Colonic mucosa (tissue), 4 donors: ENCODE measurements at regions of chr13 and their contacts with region 1.

Region 1: GRCh38 chr13:110944121-110944967 is 29.5 kb upstream of the ANKRD10 start:
- DNase-seq: no peak
- H3K4me3 ChIP-seq: no peak overlapping the region
- H3K27ac ChIP-seq: no peak overlapping the region
- H3K4me1 ChIP-seq: no peaks in the 10 kb centered on the region
- H3K27me3 ChIP-seq: no peaks in the 10 kb centered on the region
- CTCF ChIP-seq: peak; percentile 28

Region 2: GRCh38 chr13:110737555-110737954 is 206.8 kb before region 1 on chr13:
- intact Hi-C with region 1: no loop called
- DNase-seq: no peak
- H3K4me3 ChIP-seq: no peak overlapping the region
- H3K27ac ChIP-seq: no peak overlapping the region
- H3K4me1 ChIP-seq: no peaks in the 10 kb centered on the region
- H3K27me3 ChIP-seq: no peaks in the 10 kb centered on the region
- CTCF ChIP-seq: no peak

Region 3: DNA sequence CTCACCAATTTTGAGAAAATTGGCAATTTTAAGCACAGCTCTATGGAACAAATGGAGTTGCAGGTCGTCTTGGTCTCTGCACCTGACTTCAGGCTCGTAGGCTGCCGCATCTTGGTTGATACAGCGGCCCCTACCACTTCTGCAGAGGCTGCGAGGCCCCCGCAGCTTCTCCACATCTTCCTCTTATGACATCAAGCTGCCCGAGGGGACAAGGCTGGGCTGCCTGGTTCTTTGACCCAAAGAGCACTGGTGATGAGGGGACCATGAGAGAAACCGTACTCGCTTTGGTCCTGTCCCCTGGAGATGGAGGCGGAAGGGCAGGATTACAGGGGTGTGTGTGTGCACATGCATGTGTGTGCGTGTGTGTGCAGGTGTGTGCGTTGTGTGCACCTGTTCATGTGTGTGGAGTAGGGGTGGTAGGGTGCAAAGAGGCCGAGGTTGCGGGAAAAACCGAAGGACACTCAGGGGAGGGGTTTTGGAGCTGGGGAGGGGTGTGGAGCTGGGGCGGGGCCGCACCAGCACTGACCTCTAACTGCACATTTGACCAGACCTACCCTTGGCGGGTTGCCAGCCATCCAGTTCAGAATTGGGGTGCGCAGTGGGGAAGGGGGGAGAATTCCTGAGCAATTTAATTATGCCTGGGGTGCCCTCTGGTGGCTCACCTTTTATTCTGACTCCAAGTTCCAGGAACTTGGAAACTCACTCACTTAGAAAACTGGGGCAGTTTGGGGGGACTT is 105.6 kb after region 1 on chr13:
- intact Hi-C with region 1: loop called (anchors 5 kb)
- DNase-seq: peak; percentile 34
- H3K4me3 ChIP-seq: no peak overlapping the region
- H3K27ac ChIP-seq: no peak overlapping the region
- H3K4me1 ChIP-seq: no peaks in the 10 kb centered on the region
- H3K27me3 ChIP-seq: no peaks in the 10 kb centered on the region
- CTCF ChIP-seq: peak; percentile 34

Region 4: DNA sequence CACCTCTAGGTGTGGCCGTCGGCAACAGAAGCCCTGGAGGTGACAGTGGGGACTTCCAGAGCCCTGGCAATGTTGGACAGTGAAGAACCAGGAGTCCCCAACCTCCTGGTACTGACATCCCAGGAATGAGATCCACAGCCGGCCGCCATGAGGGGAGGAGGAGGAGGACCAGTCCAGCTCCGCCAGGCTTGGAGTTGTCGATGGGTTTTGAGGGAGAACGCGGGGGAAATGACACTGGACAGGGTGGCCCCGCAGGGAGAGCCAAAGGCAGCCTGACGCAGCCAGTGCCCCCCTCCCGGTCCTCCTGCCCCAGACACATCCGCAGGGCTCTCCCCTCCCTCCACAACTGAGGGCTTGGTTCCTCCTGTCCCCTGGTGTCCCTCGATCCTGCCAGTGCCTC is 1489.7 kb after region 1 on chr13:
- intact Hi-C with region 1: loop called (anchors 5 kb)
- DNase-seq: no peak
- H3K4me3 ChIP-seq: no peak overlapping the region
- H3K27ac ChIP-seq: no peak overlapping the region
- H3K4me1 ChIP-seq: no peaks in the 10 kb centered on the region
- H3K27me3 ChIP-seq: no peaks in the 10 kb centered on the region
- CTCF ChIP-seq: no peak